H1 (cell line): ENCODE measurements at regions of chr12 and their contacts with region 1.

Region 1: GRCh38 chr12:108664338-108665258 is 30.9 kb upstream of the SELPLG start:
- DNase-seq: peak; percentile 63 to 86
- H3K4me3 ChIP-seq: no peak overlapping the region
- H3K27ac ChIP-seq: no peak overlapping the region
- H3K4me1 ChIP-seq: peaks cover 0 to 3% (median 0%) of the 10 kb centered on the region in 4 experiments; a peak in 3 of 7 replicates
- H3K27me3 ChIP-seq: no peaks in the 10 kb centered on the region
- CTCF ChIP-seq: peak; percentile 77 to 98 (median 91)
- EP300 ChIP-seq: no peak
- POLR2A ChIP-seq: no peak
- RAD21 ChIP-seq: peak; percentile 99 to 100

Region 2: DNA sequence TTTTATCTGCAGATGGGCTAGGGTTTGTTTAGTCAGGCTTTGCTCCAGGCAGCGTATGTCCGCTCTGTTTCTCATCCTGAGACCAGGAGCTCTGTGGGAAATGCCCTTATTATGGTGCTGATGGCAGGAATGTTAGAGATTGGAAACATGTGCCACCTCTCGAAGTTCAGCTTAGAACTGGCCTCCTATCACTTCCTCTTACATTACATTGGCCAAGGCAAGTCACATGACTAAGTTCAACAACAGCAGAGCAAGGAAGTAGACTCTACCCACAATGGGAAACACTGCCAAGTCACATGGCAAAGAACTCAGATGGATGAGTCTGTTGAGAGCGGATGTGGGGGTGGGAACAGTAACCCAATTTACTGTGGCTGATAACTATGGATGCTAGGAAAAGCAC is 697.4 kb before region 1 on chr12:
- CTCF ChIA-PET with region 1: no interaction called
- POLR2A ChIA-PET with region 1: no interaction called
- DNase-seq: no peak
- H3K4me3 ChIP-seq: no peak overlapping the region
- H3K27ac ChIP-seq: no peak overlapping the region
- H3K4me1 ChIP-seq: no peaks in the 10 kb centered on the region
- H3K27me3 ChIP-seq: peaks cover 0 to 1% (median 0%) of the 10 kb centered on the region in 4 experiments; a peak in 1 of 7 replicates
- CTCF ChIP-seq: no peak
- EP300 ChIP-seq: no peak
- POLR2A ChIP-seq: no peak
- RAD21 ChIP-seq: no peak

Region 3: DNA sequence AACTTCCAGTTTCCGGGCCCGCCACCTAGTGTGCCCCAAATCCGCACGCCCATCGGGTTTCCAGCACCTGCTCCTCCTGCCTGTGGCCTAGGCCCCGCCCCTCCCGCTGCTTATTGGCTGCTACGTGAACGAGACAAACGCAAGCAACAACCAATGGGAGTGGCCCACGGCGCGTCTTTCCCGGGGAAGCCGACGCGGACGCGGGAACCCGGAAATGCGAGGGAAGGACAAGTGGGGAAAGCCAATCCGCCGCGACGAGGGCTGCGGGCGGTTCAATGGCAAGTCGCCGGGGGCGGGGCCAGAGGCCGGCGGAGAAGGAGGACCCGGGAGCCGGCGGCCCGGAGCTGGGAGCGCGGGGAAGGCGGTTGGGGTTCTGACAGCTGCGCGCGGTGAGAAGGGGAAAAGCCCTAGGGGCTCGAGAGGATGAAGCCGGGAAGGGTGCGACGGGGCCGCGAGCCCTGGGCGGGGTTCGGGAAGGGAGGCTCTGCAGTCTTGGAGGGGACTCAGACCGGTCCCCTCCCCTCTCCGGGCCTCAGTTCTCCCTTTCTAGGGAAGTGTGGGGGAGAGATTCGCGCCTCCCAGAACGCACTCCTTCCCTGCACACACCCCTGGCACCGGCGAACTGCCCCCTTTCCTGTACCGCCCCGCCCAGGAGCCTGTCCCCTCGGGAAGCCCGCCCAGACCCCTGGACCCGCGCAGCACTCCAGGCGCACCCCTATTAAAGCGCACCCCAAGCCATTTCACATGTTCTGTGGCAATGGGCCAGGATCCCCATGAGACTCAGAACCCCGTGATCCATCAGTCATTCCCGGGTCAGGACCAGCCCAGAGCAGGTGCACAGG is 149.4 kb before region 1 on chr12 and contains the start of gene FICD:
- CTCF ChIA-PET with region 1: no interaction called
- POLR2A ChIA-PET with region 1: no interaction called
- DNase-seq: peak; percentile 98 to 99
- H3K4me3 ChIP-seq: peak within 1 kb of the TSS; percentile 52 to 87 (median 62)
- H3K27ac ChIP-seq: no peak within 1 kb of the TSS; the same call in 1 of the 2 replicates
- H3K4me1 ChIP-seq: peaks cover 0 to 8% (median 3%) of the 10 kb centered on the region in 4 experiments; a peak in 6 of 7 replicates
- H3K27me3 ChIP-seq: no peaks in the 10 kb centered on the region
- CTCF ChIP-seq: no peak
- EP300 ChIP-seq: no peak; a peak in 1 of 3 replicates
- POLR2A ChIP-seq: peak; percentile 51 to 52
- RAD21 ChIP-seq: no peak
- total RNA-seq, gene FICD: 6.0 TPM in 2 replicates

Region 4: DNA sequence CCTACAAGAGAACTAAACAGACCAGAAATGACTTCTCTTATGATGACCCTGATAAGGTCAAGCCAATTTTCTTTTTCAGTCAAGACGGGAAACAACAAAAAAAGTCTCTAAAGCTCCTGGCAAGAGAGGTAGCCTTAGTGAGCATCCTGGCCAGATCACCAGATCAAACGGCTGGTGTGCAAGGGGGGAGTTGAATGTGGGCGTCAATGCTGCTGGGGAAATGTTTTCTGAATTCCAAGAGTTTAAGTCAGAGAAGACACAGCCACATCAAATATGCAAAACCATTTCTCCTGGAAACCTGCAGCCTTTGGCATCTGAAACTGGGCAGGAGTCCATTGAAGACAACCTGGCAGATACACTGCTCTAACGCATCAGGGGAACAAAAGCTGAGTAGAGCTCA is 14.9 kb before region 1 on chr12:
- CTCF ChIA-PET with region 1: interaction called, 16 read pairs
- POLR2A ChIA-PET with region 1: interaction called, 4 read pairs
- DNase-seq: no peak
- H3K4me3 ChIP-seq: no peak overlapping the region
- H3K27ac ChIP-seq: no peak overlapping the region
- H3K4me1 ChIP-seq: peaks cover 3 to 14% (median 8%) of the 10 kb centered on the region in 4 experiments; a peak in 6 of 7 replicates
- H3K27me3 ChIP-seq: no peaks in the 10 kb centered on the region
- CTCF ChIP-seq: no peak
- EP300 ChIP-seq: no peak
- POLR2A ChIP-seq: no peak
- RAD21 ChIP-seq: no peak

Region 5: DNA sequence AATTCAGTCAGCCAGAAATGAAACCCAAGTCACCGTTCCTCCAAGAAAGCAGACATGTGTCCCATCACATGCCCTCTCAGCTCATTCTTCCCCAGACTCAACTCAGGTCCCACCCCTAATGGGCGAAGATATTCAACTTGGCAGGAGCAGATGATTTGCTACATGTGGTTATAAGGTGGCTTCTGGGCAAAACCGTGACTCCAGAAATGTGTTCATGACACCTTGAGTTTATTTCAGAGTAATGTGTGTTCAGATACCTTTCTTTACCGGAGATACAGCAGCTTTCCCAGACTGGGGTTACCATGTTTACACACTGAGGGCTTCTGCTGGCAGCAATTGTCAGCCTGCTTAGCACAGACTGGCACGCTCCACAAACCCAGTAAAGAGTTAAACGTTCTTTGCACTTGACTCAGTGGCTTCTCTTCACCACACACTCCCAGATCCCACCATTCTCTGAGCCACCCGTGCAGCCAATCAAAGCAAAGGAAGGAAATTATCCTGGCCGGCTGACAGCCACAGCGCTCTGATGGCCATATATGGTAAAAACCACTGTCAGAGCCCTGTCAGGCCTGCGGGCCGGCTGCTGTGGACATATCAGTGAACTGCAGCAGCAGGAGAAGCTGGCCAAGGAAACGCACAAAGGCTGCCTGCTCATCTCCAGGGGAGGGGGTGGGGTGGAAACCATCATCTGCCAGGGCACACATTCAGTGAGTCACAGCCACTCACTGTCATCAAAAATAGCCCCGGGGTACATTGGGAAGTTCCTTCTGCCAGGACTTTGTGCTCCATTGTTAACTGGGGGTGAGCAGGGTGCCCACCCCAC is 26.8 kb after region 1 on chr12:
- CTCF ChIA-PET with region 1: interaction called, 41 read pairs
- POLR2A ChIA-PET with region 1: interaction called, 6 read pairs
- DNase-seq: peak; percentile 76 to 82
- H3K4me3 ChIP-seq: no peak overlapping the region; a peak in 1 of 8 replicates
- H3K27ac ChIP-seq: peak overlapping the region; percentile 87
- H3K4me1 ChIP-seq: peaks cover 9 to 24% (median 15%) of the 10 kb centered on the region in 4 experiments
- H3K27me3 ChIP-seq: no peaks in the 10 kb centered on the region
- CTCF ChIP-seq: peak; percentile 22 to 37 (median 30)
- EP300 ChIP-seq: peak in 1 of 2 experiments; percentile 12; a peak in 2 of 3 replicates
- POLR2A ChIP-seq: peak in 1 of 2 experiments; percentile 67; a peak in 2 of 3 replicates
- RAD21 ChIP-seq: peak; percentile 31 to 36; a peak in 2 of 4 replicates

Region 6: DNA sequence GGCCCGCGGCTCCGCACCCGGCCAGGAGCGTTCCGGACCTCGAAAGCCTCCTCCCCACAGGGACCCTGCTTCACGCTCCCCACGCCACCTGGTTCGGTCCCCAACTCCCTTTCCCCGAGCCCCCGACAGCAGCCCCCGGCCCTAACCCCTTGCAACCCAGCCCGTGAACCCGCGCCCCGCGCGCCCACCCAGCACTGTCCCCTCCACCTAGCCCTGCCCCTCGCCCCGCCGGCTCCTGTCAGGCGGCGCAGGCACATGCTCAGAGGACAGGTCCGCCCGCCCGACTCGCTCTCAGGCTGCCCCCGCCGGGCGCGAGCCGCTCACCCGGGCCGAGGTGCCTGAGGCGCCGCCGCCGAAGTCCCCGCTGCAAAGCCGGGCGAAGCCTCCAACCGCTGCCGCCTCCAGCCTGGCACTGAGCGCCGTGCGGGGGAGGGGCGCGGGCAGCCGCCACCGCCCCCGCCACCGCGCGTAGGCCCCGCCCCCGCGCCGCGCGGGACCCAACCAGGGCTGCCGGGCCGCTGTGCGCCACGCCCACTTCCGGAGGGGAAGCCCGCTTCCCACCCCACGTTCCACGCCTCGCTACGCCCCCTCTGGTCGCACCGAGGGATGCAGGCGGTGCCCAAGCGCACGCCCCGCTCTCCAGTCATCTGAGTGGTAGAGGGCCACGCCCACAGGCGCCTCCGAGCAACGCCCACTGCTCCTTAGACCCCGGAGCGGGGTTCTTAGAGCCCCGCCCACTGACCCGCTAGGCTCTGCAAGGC is 66.7 kb after region 1 on chr12 and contains the start of gene CORO1C:
- CTCF ChIA-PET with region 1: interaction called, 29 read pairs
- POLR2A ChIA-PET with region 1: interaction called, 6 read pairs
- DNase-seq: peak; percentile 89 to 100
- H3K4me3 ChIP-seq: peak within 1 kb of the TSS; percentile 77 to 92 (median 84)
- H3K27ac ChIP-seq: peak within 1 kb of the TSS; percentile 76; the same call in 1 of the 2 replicates
- H3K4me1 ChIP-seq: peaks cover 0 to 6% (median 3%) of the 10 kb centered on the region in 4 experiments; a peak in 3 of 7 replicates
- H3K27me3 ChIP-seq: no peaks in the 10 kb centered on the region
- CTCF ChIP-seq: peak; percentile 62 to 92 (median 90)
- EP300 ChIP-seq: peak in 1 of 2 experiments; percentile 53; a peak in 1 of 3 replicates
- POLR2A ChIP-seq: peak; percentile 65 to 86
- RAD21 ChIP-seq: peak; percentile 48 to 58
- total RNA-seq, gene CORO1C: 120 and 130 TPM in 2 replicates

Region 7: GRCh38 chr12:108768591-108769500 is 104.2 kb after region 1 on chr12:
- CTCF ChIA-PET with region 1: interaction called, 59 read pairs
- POLR2A ChIA-PET with region 1: no interaction called
- DNase-seq: peak; percentile 49 to 83
- H3K4me3 ChIP-seq: peak overlapping the region; percentile 32 to 61 (median 50)
- H3K27ac ChIP-seq: no peak overlapping the region
- H3K4me1 ChIP-seq: peaks cover 0 to 13% (median 2%) of the 10 kb centered on the region in 4 experiments; a peak in 4 of 7 replicates
- H3K27me3 ChIP-seq: no peaks in the 10 kb centered on the region
- CTCF ChIP-seq: no peak
- EP300 ChIP-seq: no peak
- POLR2A ChIP-seq: no peak
- RAD21 ChIP-seq: peak in 1 of 2 experiments; percentile 1; a peak in 1 of 4 replicates

Region 8: DNA sequence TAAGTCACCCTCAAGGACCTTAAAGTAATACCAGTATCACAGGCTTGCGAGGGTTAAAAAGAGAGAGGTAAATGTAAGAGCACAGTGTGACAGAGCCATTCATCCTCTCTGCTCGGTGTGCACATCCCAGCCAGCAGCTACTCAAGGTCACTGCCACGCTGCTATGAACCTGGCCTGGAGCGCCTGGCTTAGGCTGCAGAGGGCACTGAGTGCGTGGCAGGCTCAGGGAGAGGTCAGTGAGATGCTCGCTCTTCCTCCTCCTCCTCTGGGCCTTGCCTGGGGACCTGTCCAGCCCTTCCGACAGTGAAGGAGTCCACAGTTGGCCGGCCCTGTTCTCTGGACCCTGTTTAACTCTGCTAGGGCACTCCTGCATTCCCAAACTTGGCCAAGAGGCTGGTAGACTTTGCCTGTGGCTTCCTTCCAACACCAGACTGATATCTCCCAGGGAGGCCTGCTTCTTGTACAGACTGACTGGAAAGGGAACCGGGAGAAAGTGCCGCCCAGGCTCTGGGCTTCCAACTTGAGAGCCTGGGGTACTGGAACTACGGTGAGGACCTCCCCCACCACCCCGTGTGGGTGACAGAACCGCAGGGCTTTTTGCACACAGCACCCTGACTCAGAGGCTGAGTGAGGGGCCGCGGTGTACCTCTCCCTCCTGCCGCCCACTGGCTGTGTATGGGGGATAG is 129.3 kb after region 1 on chr12:
- CTCF ChIA-PET with region 1: interaction called, 188 read pairs
- POLR2A ChIA-PET with region 1: no interaction called
- DNase-seq: no peak
- H3K4me3 ChIP-seq: no peak overlapping the region
- H3K27ac ChIP-seq: peak overlapping the region; percentile 7; the same call in 1 of the 2 replicates
- H3K4me1 ChIP-seq: peaks cover 0 to 2% (median 0%) of the 10 kb centered on the region in 4 experiments; a peak in 3 of 7 replicates
- H3K27me3 ChIP-seq: no peaks in the 10 kb centered on the region
- CTCF ChIP-seq: peak in 1 of 3 experiments; percentile 21; a peak in 1 of 4 replicates
- EP300 ChIP-seq: no peak
- POLR2A ChIP-seq: no peak
- RAD21 ChIP-seq: no peak; a peak in 1 of 4 replicates

Region 9: DNA sequence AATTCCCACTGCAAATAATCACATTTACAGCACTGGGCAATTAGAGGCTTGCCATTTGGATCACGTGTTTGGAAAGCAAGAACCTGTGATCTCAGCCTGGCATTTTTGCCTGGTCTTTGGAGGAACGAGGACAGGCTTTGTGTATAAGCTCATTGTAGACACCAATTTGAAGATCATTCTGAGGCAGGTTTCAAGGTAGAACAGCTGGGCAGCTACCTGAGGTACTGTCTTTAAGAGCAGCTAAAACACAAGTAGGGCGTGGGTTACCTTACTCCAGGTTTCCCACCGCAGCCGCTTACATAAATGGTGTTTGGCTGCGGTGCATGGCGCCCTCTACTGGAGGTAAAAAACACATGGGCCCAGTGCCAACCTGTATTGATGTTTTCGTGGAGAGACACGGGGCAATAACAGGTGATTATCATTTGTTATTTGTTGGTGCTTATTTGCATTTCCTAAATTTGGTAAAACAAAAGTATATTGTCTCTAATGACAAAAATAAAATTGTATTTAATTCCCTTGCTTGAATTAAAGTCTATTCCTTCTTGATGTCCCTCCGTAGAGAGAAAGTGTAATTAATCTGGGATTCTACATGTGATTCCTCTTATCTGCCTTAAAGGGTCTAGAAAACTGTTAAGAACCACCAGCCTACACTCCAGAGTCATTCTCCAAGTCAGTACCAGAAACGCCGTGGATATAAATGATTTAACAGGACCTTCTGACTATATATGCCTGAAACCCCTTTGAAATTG is 286.6 kb after region 1 on chr12:
- CTCF ChIA-PET with region 1: interaction called, 23 read pairs
- POLR2A ChIA-PET with region 1: no interaction called
- DNase-seq: peak; percentile 17 to 81
- H3K4me3 ChIP-seq: no peak overlapping the region
- H3K27ac ChIP-seq: no peak overlapping the region
- H3K4me1 ChIP-seq: no peaks in the 10 kb centered on the region
- H3K27me3 ChIP-seq: no peaks in the 10 kb centered on the region
- CTCF ChIP-seq: peak; percentile 78 to 85 (median 83)
- EP300 ChIP-seq: no peak
- POLR2A ChIP-seq: no peak
- RAD21 ChIP-seq: peak; percentile 91 to 96